Mammary epithelial cell (primary cell): ENCODE measurements at regions of chr12 and their contacts with region 1.

Region 1: GRCh38 chr12:3885277-3886094 is 12.3 kb upstream of the PARP11 start:
- DNase-seq: peak; percentile 22
- H3K4me3 ChIP-seq: peak overlapping the region in 1 of 3 experiments; percentile 11
- H3K27ac ChIP-seq: no peak overlapping the region
- H3K4me1 ChIP-seq: peaks cover 5% of the 10 kb centered on the region
- H3K27me3 ChIP-seq: peaks cover 3% of the 10 kb centered on the region
- CTCF ChIP-seq: peak; percentile 69 to 81

Region 2: GRCh38 chr12:3680896-3681594 is 204.4 kb before region 1 on chr12:
- CTCF ChIA-PET with region 1: no interaction called
- dilution Hi-C with region 1: no loop called
- in situ Hi-C with region 1: no loop called
- intact Hi-C with region 1: no loop called
- DNase-seq: peak; percentile 14
- H3K4me3 ChIP-seq: no peak overlapping the region
- H3K27ac ChIP-seq: no peak overlapping the region
- H3K4me1 ChIP-seq: no peaks in the 10 kb centered on the region
- H3K27me3 ChIP-seq: no peaks in the 10 kb centered on the region
- CTCF ChIP-seq: peak; percentile 33 to 41

Region 3: GRCh38 chr12:3837049-3837448 is 48.4 kb before region 1 on chr12:
- CTCF ChIA-PET with region 1: no interaction called
- dilution Hi-C with region 1: no loop called
- in situ Hi-C with region 1: no loop called
- intact Hi-C with region 1: no loop called
- DNase-seq: no peak
- H3K4me3 ChIP-seq: no peak overlapping the region
- H3K27ac ChIP-seq: no peak overlapping the region
- H3K4me1 ChIP-seq: no peaks in the 10 kb centered on the region
- H3K27me3 ChIP-seq: no peaks in the 10 kb centered on the region
- CTCF ChIP-seq: no peak

Region 4: GRCh38 chr12:4030929-4031702 is 145.6 kb after region 1 on chr12:
- CTCF ChIA-PET with region 1: interaction called, 4 read pairs
- dilution Hi-C with region 1: loop called (anchors 5 kb)
- in situ Hi-C with region 1: loop called (anchors 5 to 25 kb)
- intact Hi-C with region 1: no loop called
- DNase-seq: peak; percentile 99
- H3K4me3 ChIP-seq: peak overlapping the region in 1 of 3 experiments; percentile 25
- H3K27ac ChIP-seq: peak overlapping the region; percentile 91
- H3K4me1 ChIP-seq: peaks cover 42% of the 10 kb centered on the region
- H3K27me3 ChIP-seq: no peaks in the 10 kb centered on the region
- CTCF ChIP-seq: no peak

Region 5: DNA sequence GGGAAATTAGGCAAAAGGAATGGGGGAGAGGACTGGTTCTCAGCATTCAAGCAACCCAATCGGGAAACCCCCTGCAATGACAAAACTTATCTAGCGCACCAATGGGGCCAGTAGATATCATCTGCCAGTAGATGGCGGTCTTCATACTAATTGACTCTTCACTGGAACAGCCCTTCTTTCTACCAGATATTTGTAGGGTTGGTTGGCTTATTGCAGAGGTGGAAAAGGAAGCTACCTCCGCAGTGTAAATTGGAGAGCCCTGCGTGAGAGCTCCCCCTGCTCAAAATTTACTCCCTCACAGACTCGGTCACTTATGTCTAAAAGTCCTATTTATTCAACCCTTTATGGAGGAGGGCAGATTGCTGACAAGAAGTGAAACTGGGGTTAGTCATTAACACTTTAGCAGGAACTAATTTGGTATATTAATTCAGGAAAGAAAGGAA is 222.0 kb after region 1 on chr12:
- CTCF ChIA-PET with region 1: no interaction called
- dilution Hi-C with region 1: loop called (anchors 5 kb)
- in situ Hi-C with region 1: no loop called
- intact Hi-C with region 1: loop called (anchors 1 kb)
- DNase-seq: peak; percentile 79
- H3K4me3 ChIP-seq: no peak overlapping the region
- H3K27ac ChIP-seq: no peak overlapping the region
- H3K4me1 ChIP-seq: peaks cover 20% of the 10 kb centered on the region
- H3K27me3 ChIP-seq: no peaks in the 10 kb centered on the region
- CTCF ChIP-seq: peak; percentile 78 to 84

Region 6: GRCh38 chr12:4287325-4288211 is 402.1 kb after region 1 on chr12:
- CTCF ChIA-PET with region 1: no interaction called
- dilution Hi-C with region 1: no loop called
- in situ Hi-C with region 1: loop called (anchors 10 to 25 kb)
- intact Hi-C with region 1: no loop called
- DNase-seq: peak; percentile 70
- H3K4me3 ChIP-seq: no peak overlapping the region
- H3K27ac ChIP-seq: no peak overlapping the region
- H3K4me1 ChIP-seq: peaks cover 10% of the 10 kb centered on the region
- H3K27me3 ChIP-seq: no peaks in the 10 kb centered on the region
- CTCF ChIP-seq: no peak

Region 7: DNA sequence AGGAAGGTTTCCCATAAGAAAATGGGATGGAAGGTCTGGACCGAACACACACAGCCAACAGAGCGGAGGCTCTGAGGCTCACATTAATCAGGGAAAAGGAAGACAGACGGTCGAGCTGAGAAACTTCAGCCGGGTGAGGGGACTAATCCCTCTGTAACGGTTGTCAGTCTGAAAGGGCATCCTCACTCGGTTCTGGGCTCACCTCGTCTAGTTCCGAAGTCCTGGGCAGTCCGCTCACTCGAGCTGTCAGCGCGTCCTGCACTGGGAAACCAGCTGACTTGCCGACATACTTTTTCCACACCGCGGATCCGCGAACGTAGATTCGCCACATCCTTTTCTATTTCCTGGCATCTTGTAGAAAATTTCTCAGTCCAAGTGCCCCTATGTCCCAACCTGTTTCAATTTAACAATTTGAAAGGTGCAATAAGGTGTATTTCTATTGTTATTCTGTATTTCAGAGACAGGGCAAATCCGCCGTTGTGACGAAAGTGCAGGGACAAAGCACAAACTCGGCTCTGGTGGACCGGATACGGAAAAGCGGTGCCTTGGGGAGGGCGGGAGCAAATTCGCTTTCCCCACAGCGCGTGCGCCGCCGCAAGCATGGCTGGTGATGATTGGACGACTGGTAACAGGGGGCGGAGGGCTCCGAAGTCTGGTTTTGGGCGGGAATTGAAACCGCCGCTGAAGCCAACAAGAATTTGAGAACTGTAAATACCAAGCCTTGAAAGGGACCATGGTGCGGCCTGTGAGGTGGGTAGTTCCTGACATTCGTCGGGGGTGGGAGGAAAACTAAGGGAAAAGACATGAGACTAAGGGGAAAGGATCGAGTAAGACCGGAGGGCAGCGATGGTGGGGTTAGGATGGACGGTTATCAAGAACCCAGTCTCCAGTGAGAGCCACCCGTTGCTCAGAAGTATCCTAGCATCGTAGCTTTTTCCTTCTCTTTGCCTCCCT is 653.0 kb after region 1 on chr12 and contains the start of gene RAD51AP1:
- CTCF ChIA-PET with region 1: no interaction called
- dilution Hi-C with region 1: no loop called
- in situ Hi-C with region 1: loop called in 1 of 2 experiments (anchors 25 kb)
- intact Hi-C with region 1: no loop called
- DNase-seq: peak; percentile 95
- H3K4me3 ChIP-seq: peak within 1 kb of the TSS; percentile 76 to 100 (median 99)
- H3K27ac ChIP-seq: peak within 1 kb of the TSS; percentile 99
- H3K4me1 ChIP-seq: peaks cover 14% of the 10 kb centered on the region
- H3K27me3 ChIP-seq: no peaks in the 10 kb centered on the region
- CTCF ChIP-seq: no peak
- total RNA-seq, gene RAD51AP1: 3.0 to 23.4 TPM